Activated CD4-positive, alpha-beta T cell treated with anti-CD3 and anti-CD28 coated beads, Interleukin-2, amount 10 ng/mL, durations not matched to agents 24 days and 14 days (primary cell): ENCODE measurements at regions of chr5 and their contacts with region 1.

Region 1: GRCh38 chr5:43008369-43009153 is 31.6 kb downstream of the ANXA2R start:
- DNase-seq: peak; percentile 96
- H3K4me3 Mint-ChIP-seq: peak overlapping the region; percentile 88
- H3K27ac Mint-ChIP-seq: peak overlapping the region; percentile 95
- H3K4me1 Mint-ChIP-seq: peaks cover 36% of the 10 kb centered on the region
- H3K27me3 Mint-ChIP-seq: no peaks in the 10 kb centered on the region

Region 2: GRCh38 chr5:42908509-42909488 is 99.8 kb before region 1 on chr5:
- intact Hi-C with region 1: loop called (anchors 2 kb)
- DNase-seq: peak; percentile 96
- H3K4me3 Mint-ChIP-seq: peak overlapping the region; percentile 83
- H3K27ac Mint-ChIP-seq: peak overlapping the region; percentile 1
- H3K4me1 Mint-ChIP-seq: peaks cover 6% of the 10 kb centered on the region
- H3K27me3 Mint-ChIP-seq: peaks cover 35% of the 10 kb centered on the region

Region 3: DNA sequence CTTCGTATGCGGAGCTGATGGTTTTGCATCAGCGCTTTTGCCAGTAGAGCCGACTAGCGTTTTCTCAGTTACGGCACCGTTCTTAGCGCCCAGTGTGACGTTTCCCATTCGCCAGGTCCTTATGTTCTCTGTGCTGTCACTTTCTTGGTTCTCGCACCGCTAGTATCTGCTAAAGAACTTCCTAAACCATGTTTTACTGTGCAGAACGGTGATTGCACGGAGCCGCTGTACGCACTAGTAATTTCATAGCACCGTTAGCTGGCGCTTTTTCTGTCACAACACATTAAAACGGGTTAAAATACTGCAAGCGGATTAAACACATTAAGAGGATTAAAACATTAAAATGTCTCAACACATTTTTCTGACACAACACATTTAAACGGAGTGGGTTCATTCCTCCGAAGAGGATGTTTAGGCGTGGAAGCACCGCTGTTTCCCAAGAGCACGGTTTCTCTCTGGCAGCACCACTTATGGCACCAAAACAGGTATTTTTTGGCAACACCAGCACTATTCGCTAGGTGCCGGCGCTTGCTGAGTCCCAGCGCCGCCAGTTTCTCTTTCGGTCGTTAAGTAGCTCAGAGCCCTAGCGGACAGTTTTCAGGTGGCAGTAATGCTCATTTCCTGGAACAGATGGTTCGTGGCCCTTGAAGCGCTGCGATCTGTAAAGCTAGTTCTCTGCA is 11.2 kb after region 1 on chr5:
- intact Hi-C with region 1: loop called (anchors 1 kb)
- DNase-seq: peak; percentile 95
- H3K4me3 Mint-ChIP-seq: peak overlapping the region; percentile 97
- H3K27ac Mint-ChIP-seq: peak overlapping the region; percentile 100
- H3K4me1 Mint-ChIP-seq: peaks cover 45% of the 10 kb centered on the region
- H3K27me3 Mint-ChIP-seq: no peaks in the 10 kb centered on the region

Region 4: GRCh38 chr5:43066799-43067741 is 58.5 kb after region 1 on chr5:
- intact Hi-C with region 1: loop called (anchors 1 kb)
- DNase-seq: peak; percentile 96
- H3K4me3 Mint-ChIP-seq: peak overlapping the region; percentile 92
- H3K27ac Mint-ChIP-seq: peak overlapping the region; percentile 100
- H3K4me1 Mint-ChIP-seq: peaks cover 32% of the 10 kb centered on the region
- H3K27me3 Mint-ChIP-seq: no peaks in the 10 kb centered on the region

Region 5: DNA sequence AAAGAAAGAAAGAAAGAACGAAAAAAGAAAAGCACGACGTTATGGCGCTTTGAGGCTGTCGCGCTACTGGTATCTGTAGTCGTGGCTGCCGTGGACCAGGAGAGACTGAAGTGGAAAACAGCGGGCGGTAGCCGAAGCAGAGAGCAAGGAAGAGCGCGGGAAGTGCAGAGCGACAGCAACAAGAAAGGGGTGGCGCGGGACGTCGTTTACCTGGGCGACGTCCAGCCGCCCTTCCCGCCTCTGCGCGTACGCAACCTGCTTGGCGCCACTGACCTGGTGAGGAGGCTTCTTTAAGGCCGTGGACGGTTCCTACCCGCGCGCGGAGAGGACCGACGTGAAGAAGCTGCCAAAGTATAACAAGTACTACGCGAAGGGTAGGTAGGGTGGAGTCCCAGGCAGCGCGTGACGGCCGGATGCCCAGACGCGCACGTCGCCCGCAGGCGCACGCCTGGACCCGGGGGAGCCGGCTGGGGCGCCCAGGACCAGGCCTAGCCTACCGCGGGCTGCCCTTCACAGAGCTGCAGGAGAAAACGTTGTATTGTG is 388.3 kb after region 1 on chr5:
- intact Hi-C with region 1: loop called (anchors 1 kb)
- DNase-seq: peak; percentile 90
- H3K4me3 Mint-ChIP-seq: peak overlapping the region; percentile 98
- H3K27ac Mint-ChIP-seq: peak overlapping the region; percentile 96
- H3K4me1 Mint-ChIP-seq: peaks cover 13% of the 10 kb centered on the region
- H3K27me3 Mint-ChIP-seq: no peaks in the 10 kb centered on the region